Vagina (tissue), 2 donors: ENCODE measurements at regions of chr17 and their contacts with region 1.

Region 1: GRCh38 chr17:32742681-32743538 is 134.0 kb downstream of the MYO1D start:
- DNase-seq: no peak
- H3K4me3 ChIP-seq: no peak overlapping the region
- H3K27ac ChIP-seq: no peak overlapping the region
- H3K4me1 ChIP-seq: no peaks in the 10 kb centered on the region
- H3K27me3 ChIP-seq: no peaks in the 10 kb centered on the region
- CTCF ChIP-seq: no peak
- POLR2A ChIP-seq: no peak

Region 2: GRCh38 chr17:32495359-32496231 is 247.3 kb before region 1 on chr17:
- intact Hi-C with region 1: loop called (anchors 5 kb)
- DNase-seq: no peak
- H3K4me3 ChIP-seq: peak overlapping the region in 1 of 2 donors; percentile 4
- H3K27ac ChIP-seq: no peak overlapping the region
- H3K4me1 ChIP-seq: peaks cover 12% of the 10 kb centered on the region
- H3K27me3 ChIP-seq: no peaks in the 10 kb centered on the region
- CTCF ChIP-seq: no peak
- POLR2A ChIP-seq: no peak